ENCODE measurements at regions of chr19 and their contacts with region 1.

Region 1: DNA sequence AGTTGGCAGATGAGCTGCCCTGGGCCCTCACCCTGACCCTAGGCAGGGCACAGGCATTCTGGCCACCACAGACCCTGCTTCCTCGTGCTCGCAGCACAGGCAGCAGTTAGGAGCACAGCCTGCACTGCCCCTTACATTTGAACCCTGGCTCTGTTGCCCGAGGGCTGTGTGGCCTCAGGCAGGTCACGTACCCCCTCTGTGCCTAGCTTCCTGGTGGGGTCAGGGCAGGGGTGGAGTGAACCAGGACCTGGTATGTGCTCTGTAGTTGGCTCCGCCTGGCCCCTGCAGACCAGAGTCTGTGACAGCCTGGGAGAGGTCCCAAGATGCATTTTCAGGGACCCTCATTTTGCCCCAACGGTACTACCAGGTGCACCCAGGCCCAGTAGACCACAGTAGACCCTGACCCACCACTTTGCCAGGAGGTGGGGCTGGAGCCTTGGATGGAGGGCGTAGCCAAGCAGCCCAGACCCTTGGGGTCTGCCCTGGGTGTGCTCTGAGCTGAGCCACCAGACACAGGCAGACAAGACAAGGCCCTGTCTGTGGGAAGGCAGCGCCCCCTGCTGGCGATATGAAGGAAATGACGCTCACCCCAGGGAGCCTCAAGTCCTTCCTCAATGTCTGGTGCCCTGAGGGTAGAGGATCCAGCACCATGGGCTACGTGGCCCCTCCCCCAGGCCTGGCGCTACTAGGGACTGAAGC is 9.1 kb downstream of the LYL1 start:
- DNase-seq: peak; percentile 79 to 89
- H3K4me3 ChIP-seq: no peak overlapping the region
- H3K27ac ChIP-seq: no peak overlapping the region
- H3K4me1 ChIP-seq: peaks cover 0 to 18% (median 16%) of the 10 kb centered on the region in 4 experiments; a peak in 5 of 7 replicates
- H3K27me3 ChIP-seq: peaks cover 9 to 71% (median 45%) of the 10 kb centered on the region in 4 experiments
- CTCF ChIP-seq: peak; percentile 96
- EP300 ChIP-seq: no peak
- POLR2A ChIP-seq: no peak
- RAD21 ChIP-seq: peak; percentile 99

Region 2: DNA sequence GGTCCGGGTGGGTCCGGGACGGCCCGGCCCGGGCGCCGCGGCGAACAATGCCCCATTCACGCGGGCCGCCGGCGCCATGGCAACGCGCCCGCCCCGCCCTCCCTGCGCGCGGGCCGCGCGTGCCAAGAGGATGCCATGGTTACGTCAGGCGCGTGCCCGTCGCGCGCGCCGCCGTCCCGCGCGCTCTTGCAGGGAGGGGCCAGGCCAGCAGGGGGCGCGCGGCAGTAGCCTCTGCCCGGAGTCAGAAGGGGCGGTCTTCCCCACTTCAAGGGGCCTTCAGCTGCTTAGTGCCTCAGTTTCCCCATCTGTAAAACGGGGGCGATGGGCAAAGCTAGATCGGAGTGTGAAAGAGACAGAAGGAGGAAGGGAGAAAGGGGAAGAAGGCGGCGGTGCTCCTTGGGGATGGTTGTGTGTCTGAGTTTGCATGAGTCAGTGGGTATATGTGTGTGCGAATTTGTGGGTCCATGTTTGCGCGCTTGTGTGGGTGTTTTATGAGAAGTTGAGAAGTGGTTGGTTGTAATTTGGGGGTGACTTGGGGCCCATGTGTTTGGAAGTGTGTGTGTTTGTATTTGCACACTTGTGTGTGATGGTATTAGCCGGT is 109.9 kb before region 1 on chr19:
- CTCF ChIA-PET with region 1: interaction called, 431 read pairs
- POLR2A ChIA-PET with region 1: interaction called, 15 read pairs
- DNase-seq: peak in 1 of 2 experiments; percentile 97
- H3K4me3 ChIP-seq: peak overlapping the region in 2 of 4 experiments; percentile 11 to 63; a peak in 3 of 8 replicates
- H3K27ac ChIP-seq: no peak overlapping the region
- H3K4me1 ChIP-seq: peaks cover 0 to 7% (median 3%) of the 10 kb centered on the region in 4 experiments; a peak in 4 of 7 replicates
- H3K27me3 ChIP-seq: peaks cover 2 to 41% (median 32%) of the 10 kb centered on the region in 4 experiments
- CTCF ChIP-seq: peak; percentile 87 to 89 (median 88)
- EP300 ChIP-seq: peak in 1 of 2 experiments; percentile 31; a peak in 1 of 3 replicates
- POLR2A ChIP-seq: no peak
- RAD21 ChIP-seq: peak; percentile 64 to 73

Region 3: DNA sequence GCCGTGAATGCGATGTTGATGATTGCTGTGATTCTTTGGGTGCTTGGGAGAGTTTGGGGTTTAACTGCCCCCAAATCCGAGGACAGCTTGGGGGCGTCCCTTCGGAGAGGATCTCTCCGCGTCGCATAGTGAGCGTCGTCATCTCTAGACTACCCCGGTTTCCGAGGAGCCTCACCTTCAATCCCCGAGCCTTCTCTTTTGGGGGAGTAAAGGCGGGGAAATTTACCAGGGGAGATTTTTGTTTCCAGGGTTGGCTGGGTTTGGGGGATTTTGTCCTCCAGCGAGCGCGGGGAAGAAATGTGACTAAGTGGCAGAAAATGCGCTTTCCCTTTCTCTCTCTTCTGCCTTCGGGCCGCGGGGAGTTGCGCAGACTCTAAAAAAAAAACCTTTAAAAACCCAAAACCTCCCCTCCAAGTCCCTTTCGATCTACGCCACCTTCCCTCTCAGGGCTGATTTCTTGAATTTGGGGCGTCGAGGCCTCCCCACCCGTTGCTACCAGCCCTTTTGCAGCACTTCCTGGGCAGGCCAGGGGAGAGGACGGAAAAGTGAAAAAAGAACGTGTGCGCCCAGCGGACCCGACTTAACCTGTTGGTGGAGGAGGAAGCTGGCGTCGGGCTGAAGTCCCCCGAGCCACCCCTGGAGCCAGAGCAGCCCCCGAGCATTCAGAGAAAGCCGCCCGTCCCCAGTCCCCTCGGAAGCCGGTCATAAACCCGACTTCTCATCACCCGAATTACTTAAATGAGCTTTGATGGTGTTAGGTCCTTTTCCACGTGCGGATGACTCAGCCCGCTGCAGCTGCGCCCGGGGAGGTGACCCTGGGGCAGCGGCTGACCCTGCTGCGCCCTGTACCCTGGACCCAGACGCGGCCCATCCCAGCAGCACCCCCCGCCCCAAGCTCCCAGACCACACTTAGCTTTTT is 80.6 kb before region 1 on chr19:
- CTCF ChIA-PET with region 1: interaction called, 18 read pairs
- POLR2A ChIA-PET with region 1: interaction called, 9 read pairs
- DNase-seq: no peak
- H3K4me3 ChIP-seq: peak overlapping the region in 1 of 4 experiments; percentile 37; a peak in 4 of 8 replicates
- H3K27ac ChIP-seq: no peak overlapping the region
- H3K4me1 ChIP-seq: peaks cover 5 to 41% (median 31%) of the 10 kb centered on the region in 4 experiments
- H3K27me3 ChIP-seq: peaks cover 91 to 100% (median 100%) of the 10 kb centered on the region in 4 experiments
- CTCF ChIP-seq: no peak
- EP300 ChIP-seq: no peak
- POLR2A ChIP-seq: no peak
- RAD21 ChIP-seq: no peak

Region 4: DNA sequence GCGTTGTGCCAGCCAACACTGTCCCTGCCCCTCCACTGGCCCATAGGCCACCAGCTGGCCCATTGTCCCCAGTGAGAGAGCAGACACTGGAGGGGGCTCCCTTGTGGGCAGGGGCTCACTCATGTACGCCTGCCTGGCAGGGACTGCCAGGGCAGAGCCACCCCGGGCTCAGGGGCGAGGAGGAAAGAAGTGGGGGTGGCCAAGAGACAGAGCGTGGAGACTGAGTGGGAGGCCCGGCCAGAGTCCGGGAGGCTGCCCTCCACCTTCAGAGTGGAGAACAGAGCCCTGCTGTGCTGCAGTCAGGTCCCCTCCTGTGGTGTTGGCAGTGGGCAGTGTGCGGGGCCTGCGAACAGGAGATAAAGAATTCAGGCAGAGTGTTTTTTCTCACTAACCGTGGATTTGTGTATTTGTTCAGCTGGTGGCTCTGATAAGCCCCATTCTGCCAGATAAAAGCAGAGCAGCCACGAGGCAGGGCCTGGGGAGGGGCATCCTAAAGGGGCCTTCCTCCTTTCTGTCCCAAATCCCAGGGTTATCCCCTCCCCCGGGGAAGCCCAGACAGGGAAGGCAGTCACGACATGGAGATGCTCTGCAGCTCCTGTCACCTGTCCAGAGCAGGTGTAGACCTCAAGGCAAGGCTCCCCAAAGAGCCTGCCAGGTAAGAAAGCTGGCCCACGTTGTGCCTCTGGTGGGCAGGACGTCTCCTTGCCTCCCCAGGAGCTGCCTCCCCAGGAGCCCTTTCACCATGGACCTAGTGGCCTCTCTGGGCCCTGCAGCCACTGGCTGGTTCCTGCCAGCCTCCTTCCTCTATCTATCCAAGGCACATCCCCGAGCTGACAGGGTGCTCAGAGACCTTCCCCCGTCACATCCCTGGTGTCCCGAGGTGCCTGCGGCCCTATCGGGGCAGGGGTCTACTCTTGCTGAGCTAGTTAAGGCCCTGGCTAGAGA is 23.9 kb before region 1 on chr19:
- CTCF ChIA-PET with region 1: interaction called, 1,145 read pairs
- POLR2A ChIA-PET with region 1: no interaction called
- DNase-seq: no peak
- H3K4me3 ChIP-seq: no peak overlapping the region
- H3K27ac ChIP-seq: no peak overlapping the region
- H3K4me1 ChIP-seq: no peaks in the 10 kb centered on the region; a peak in 1 of 7 replicates
- H3K27me3 ChIP-seq: peaks cover 0 to 5% (median 2%) of the 10 kb centered on the region in 4 experiments; a peak in 3 of 7 replicates
- CTCF ChIP-seq: no peak
- EP300 ChIP-seq: no peak
- POLR2A ChIP-seq: no peak
- RAD21 ChIP-seq: no peak

Region 5: DNA sequence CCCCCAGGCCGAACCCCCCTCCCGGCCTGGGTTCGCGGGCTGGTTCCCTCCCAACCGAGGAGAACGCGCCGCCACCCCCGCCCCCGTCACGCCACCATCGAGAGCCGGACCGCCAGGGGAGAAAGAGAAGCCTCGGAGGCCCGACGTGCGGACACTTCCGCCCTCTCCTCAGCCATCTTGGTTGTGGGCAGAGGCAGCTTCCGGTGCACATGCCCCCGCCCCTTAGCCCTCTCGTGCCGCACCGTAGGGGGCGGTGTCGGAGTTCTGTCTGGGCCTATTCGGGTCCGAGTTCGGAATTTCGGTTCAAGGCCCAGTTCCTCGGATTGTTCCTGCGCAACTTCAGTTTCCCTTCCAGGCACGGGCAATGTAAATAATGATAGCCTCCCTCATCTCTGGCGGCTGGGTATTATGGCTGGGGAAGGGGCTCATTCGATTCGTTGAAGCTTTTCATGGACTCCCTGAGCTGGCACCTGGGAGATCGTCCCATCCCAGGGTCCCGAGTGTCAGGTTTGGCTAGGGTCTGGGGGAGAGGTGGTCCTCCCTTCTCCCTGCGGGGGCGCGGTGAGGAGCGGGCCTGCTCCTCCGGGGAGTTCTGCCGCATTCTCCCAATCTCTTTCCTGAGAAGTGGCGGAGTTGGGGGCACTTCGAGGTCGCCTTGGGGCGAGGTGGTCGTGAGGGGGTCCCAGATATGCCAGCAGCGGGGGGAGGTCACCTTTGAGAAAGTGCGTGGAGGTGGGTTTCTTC is 56.8 kb after region 1 on chr19 and contains the starts of genes IER2 and STX10:
- CTCF ChIA-PET with region 1: no interaction called
- POLR2A ChIA-PET with region 1: interaction called, 13 read pairs
- DNase-seq: peak in 1 of 2 experiments; percentile 91
- H3K4me3 ChIP-seq: peak within 1 kb of the TSS; percentile 87 to 97 (median 94)
- H3K27ac ChIP-seq: peak within 1 kb of the TSS; percentile 79
- H3K4me1 ChIP-seq: peaks cover 0 to 6% (median 3%) of the 10 kb centered on the region in 4 experiments; a peak in 3 of 7 replicates
- H3K27me3 ChIP-seq: no peaks in the 10 kb centered on the region; a peak in 1 of 7 replicates
- CTCF ChIP-seq: peak in 1 of 3 experiments; percentile 33; a peak in 2 of 4 replicates
- EP300 ChIP-seq: peak in 1 of 2 experiments; percentile 43; a peak in 1 of 3 replicates
- POLR2A ChIP-seq: no peak; a peak in 1 of 3 replicates
- RAD21 ChIP-seq: peak; percentile 12 to 18; a peak in 2 of 4 replicates
- total RNA-seq, gene IER2: 137 and 138 TPM in 2 replicates
- total RNA-seq, gene STX10: 50.8 and 53.0 TPM in 2 replicates

Region 6: DNA sequence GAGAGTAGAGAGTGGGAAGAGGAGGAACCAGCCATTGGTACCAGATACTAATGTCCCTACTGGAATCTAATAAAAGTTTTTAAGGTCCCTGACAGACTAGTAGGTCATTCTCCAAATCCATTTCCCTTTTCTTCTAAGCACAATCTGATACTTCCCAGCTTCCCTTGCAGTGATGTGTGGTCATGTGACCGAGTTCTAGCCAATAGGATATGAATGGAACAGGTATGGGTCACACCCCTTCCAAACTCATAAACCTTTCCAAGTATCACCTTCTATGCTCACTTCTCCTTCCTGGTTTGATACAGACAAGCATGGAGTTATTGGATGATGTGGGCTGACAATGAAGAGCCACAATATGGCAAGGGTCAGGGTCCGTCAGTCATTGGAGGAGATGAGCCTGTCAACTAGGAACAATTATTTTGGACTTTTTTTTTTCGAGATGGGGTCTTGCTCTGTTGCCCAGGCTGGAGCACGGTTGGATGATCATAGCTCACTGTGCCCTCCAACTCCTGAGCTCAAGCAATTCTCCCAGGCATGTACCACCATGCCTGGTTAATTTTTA is 358.0 kb after region 1 on chr19:
- CTCF ChIA-PET with region 1: no interaction called
- POLR2A ChIA-PET with region 1: no interaction called
- DNase-seq: no peak
- H3K4me3 ChIP-seq: no peak overlapping the region
- H3K27ac ChIP-seq: no peak overlapping the region
- H3K4me1 ChIP-seq: no peaks in the 10 kb centered on the region
- H3K27me3 ChIP-seq: no peaks in the 10 kb centered on the region
- CTCF ChIP-seq: no peak
- EP300 ChIP-seq: no peak
- POLR2A ChIP-seq: no peak
- RAD21 ChIP-seq: no peak

Measured in H1 (cell line).